ENCODE measurements at regions of chr15 and their contacts with region 1.

Region 1: GRCh38 chr15:78506971-78507830 is at the start of gene HYKK:
- DNase-seq: peak; percentile 87
- ATAC-seq: peak; percentile 91
- H3K4me3 Mint-ChIP-seq: peak within 1 kb of the TSS; percentile 77
- H3K27ac Mint-ChIP-seq: peak within 1 kb of the TSS; percentile 58
- H3K4me1 Mint-ChIP-seq: peaks cover 22% of the 10 kb centered on the region
- H3K27me3 Mint-ChIP-seq: no peaks in the 10 kb centered on the region
- total RNA-seq, gene HYKK: 2.5 to 4.2 TPM

Region 2: DNA sequence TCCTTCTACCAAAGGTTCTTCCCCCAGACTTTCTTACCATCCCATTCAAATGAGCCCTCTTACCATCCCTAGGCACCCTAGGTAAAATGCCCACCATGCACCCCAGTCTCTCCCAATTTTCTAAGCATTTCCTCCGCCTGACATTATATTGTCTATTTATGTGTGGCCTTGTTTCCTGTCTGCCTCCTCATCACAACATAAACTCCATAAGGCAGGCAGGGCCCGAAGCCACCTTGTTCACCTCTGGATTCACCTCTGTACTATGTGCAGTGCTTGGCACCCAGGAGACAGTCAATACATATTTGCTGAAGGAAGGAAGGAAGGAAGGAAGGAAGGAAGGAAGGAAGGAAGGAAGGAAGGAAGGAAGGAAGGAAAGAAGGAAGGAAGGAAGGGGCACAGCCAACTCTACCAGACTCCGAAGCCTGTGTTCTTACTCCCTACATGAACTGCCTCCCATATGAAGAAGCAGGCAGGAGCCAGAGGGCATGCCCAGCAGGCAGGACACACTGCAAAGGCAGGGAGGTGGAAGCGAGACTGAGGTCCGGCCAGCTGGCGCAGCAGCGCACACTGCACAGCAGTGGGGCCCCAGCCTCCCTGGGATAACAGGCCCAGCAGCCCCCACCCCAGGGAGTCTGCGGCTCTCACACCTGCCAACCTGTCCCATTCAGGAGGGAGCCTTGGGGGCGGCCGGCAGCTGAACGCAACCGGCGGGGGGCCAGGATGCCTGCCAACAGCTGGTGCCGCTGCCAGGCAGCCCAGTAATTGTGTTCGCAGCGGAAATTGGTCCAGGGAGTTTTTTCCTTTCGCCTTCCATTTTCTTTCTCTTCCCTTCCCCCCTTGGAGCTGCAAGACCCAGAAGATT is 768.5 kb before region 1 on chr15:
- CTCF ChIA-PET with region 1: no interaction called
- POLR2A ChIA-PET with region 1: no interaction called
- intact Hi-C with region 1: no loop called
- DNase-seq: no peak
- ATAC-seq: no peak
- H3K4me3 Mint-ChIP-seq: no peak overlapping the region
- H3K27ac Mint-ChIP-seq: no peak overlapping the region
- H3K4me1 Mint-ChIP-seq: no peaks in the 10 kb centered on the region
- H3K27me3 Mint-ChIP-seq: peaks cover 5% of the 10 kb centered on the region

Region 3: DNA sequence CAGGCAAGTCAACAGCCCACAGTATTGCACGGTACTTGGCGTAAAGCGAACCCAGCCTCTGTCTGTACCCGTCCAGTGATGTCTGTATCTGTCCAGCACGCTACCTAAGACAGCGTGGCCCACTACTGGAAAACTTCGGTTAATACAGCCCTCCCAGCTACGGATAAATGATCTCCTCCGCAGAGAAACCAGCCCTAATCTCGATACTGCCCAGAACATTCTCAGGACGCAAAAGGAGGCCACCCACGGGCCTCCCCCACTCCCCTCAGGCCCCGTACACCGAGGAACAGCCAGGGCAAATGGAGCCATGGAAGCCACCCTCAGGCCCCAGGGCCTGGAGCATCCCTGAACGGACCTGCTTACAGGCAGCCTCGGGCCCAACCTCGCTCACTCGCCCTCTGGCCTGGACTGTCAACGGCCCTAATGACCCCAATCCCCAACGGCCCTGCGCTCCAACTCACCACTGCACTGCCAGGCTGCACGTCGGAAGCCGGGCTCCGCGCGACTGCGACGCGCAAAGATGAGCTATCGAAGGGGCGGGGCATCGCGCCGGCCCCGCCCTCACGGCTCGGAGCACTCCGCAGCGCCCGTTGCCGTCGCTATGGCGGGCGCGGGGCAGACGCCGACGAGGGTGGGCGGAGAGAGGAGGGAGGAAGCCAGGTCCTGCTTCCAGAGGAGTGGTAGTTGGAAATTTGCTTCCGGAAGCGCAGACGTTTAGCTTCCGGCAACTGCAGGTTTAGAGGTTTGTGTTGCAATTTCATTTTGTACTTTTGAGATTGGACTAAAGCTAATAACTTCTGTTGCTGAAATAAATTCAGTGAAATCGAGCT is 207.9 kb before region 1 on chr15 and contains the start of gene SKIC8:
- CTCF ChIA-PET with region 1: no interaction called
- POLR2A ChIA-PET with region 1: no interaction called
- intact Hi-C with region 1: loop called (anchors 1 to 10 kb)
- DNase-seq: peak; percentile 95
- ATAC-seq: peak; percentile 96
- H3K4me3 Mint-ChIP-seq: peak within 1 kb of the TSS; percentile 96
- H3K27ac Mint-ChIP-seq: peak within 1 kb of the TSS; percentile 91
- H3K4me1 Mint-ChIP-seq: peaks cover 29% of the 10 kb centered on the region
- H3K27me3 Mint-ChIP-seq: no peaks in the 10 kb centered on the region
- total RNA-seq, gene SKIC8: 39.2 to 52.6 TPM

Region 4: DNA sequence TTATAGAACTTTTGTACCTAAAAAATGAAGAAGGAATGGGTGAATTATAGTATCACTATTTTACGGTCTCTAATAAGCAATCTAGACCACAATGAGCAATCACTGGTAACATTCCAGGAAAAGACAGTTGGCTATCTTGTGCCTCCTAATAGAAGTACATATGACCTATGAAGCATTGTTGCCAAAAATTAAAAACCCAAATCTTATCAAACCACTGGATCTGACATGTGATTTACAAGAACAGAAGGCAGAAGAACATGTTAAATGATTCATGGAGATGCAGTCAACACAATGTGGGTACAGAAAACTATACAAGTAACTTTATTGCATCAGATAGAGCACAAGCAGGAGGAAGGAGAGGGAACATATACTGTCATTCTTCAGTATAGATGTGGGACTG is 14.3 kb before region 1 on chr15:
- CTCF ChIA-PET with region 1: no interaction called
- POLR2A ChIA-PET with region 1: no interaction called
- intact Hi-C with region 1: no loop called
- DNase-seq: no peak
- ATAC-seq: no peak
- H3K4me3 Mint-ChIP-seq: no peak overlapping the region
- H3K27ac Mint-ChIP-seq: peak overlapping the region; percentile 51
- H3K4me1 Mint-ChIP-seq: peaks cover 6% of the 10 kb centered on the region
- H3K27me3 Mint-ChIP-seq: no peaks in the 10 kb centered on the region

Region 5: DNA sequence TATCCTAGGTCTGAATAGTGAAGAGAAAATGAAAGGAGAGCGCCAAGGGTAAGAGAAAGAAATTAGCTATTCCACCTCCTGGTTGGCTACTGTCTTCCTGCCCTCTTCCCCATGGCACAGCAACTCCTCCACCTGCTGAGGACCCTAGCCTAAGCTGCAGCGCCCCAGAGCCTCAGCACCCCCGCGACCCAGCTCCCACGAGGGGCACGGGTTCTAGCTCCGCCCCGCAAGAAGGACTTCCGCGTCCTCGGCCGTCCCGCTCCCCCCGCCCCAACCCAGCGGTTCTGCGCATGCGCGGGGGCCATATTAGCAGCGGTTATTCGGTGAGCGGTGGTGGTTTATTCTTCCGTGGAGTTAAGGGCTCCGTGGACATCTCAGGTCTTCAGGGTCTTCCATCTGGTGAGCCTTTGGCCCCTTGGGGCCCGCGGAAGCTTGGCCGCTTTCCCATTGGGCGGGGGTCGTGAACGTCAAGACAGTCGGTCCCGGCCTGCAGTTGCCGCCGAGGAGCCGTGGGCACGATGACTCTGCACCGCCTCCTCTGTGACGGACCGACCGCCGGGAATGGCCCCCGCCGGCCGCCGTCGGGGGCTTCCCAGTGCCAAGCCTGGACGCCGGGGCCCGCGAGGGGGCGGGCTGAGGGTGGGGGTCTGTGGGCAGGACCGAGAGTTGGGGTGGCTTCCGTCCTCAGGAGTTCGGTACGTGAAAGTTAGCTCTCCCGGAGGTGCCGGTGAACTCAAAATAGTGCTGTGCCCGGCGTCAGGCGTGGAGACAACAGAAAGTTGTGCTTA is 33.1 kb after region 1 on chr15 and contains the start of gene PSMA4:
- CTCF ChIA-PET with region 1: no interaction called
- POLR2A ChIA-PET with region 1: no interaction called
- intact Hi-C with region 1: loop called (anchors 1 kb)
- DNase-seq: peak; percentile 96
- ATAC-seq: peak; percentile 86
- H3K4me3 Mint-ChIP-seq: peak within 1 kb of the TSS; percentile 91
- H3K27ac Mint-ChIP-seq: peak within 1 kb of the TSS; percentile 98
- H3K4me1 Mint-ChIP-seq: peaks cover 27% of the 10 kb centered on the region
- H3K27me3 Mint-ChIP-seq: no peaks in the 10 kb centered on the region
- total RNA-seq, gene PSMA4: 273 to 312 TPM

Region 6: DNA sequence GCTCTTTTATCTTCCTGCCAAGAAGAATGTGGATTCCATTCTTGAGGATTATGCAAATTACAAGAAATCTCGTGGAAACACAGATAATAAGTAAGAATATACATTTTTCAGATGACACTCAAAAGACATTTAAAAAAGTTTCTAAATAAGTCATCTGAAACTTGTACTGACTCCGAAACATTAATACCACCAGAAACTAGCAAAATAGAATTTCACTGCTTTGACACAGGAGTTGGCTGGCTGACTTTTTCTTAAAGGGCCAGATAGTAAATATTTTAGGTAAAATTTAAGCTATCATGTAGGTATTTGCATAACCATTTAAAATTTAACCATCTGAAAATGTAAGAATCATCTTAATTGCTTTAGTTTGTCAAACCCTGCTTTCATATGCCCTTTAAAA is 386.3 kb after region 1 on chr15:
- CTCF ChIA-PET with region 1: no interaction called
- POLR2A ChIA-PET with region 1: no interaction called
- intact Hi-C with region 1: no loop called
- DNase-seq: no peak
- ATAC-seq: peak; percentile 33
- H3K4me3 Mint-ChIP-seq: no peak overlapping the region
- H3K27ac Mint-ChIP-seq: no peak overlapping the region
- H3K4me1 Mint-ChIP-seq: peaks cover 25% of the 10 kb centered on the region
- H3K27me3 Mint-ChIP-seq: no peaks in the 10 kb centered on the region

Measured in activated CD4-positive, alpha-beta T cell treated with anti-CD3 and anti-CD28 coated beads for 36 hours (primary cell).